Activated CD8-positive, alpha-beta T cell treated with anti-CD3 and anti-CD28 coated beads, Interleukin-2, amount 10 ng/mL, durations not matched to agents 7 days and 5 days (primary cell): ENCODE measurements at regions of chr15 and their contacts with region 1.

Region 1: DNA sequence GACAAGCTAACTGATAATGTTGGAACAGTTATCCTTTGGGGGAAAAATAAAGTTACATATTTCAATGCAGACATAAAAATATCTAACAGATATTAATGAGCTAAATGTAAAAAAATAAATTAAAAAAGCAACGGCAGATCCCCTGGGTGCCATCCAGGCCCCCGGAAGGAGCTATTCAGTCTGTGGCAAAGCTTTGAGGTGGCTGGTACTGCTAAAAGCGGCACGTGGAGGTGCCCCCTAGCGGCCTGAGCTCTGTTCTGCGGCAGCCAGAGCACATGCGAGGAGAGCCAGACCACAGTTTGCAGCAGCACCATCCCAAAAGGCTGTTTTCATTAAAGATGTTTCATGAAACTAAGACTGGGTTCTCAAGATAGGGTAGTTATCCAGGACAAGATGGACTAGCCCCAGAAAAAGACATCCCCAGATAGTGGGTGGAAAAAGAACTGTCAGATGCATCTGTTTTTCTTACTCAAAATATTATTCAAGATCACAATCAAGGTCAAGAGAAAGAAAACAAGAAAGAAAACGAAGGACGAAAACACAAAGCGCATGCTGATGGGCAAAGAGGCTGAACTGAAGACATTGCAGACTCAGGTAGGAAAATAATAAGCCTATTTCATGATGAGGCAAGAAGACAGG is 18.7 kb downstream of the AP3S2 start:
- DNase-seq: peak; percentile 88
- ATAC-seq: peak; percentile 100
- H3K4me3 Mint-ChIP-seq: no peak overlapping the region
- H3K27ac Mint-ChIP-seq: peak overlapping the region; percentile 52
- H3K4me1 Mint-ChIP-seq: peaks cover 6% of the 10 kb centered on the region
- H3K27me3 Mint-ChIP-seq: no peaks in the 10 kb centered on the region

Region 2: GRCh38 chr15:89750560-89751542 is 124.2 kb before region 1 on chr15 and contains the start of gene MESP1:
- CTCF ChIA-PET with region 1: interaction called, 11 read pairs
- POLR2A ChIA-PET with region 1: no interaction called
- DNase-seq: peak; percentile 90
- ATAC-seq: peak; percentile 96
- H3K4me3 Mint-ChIP-seq: peak within 1 kb of the TSS; percentile 69
- H3K27ac Mint-ChIP-seq: peak within 1 kb of the TSS; percentile 64
- H3K4me1 Mint-ChIP-seq: no peaks in the 10 kb centered on the region
- H3K27me3 Mint-ChIP-seq: peaks cover 24% of the 10 kb centered on the region
- total RNA-seq, gene MESP1: 1.8 to 2.4 TPM

Region 3: DNA sequence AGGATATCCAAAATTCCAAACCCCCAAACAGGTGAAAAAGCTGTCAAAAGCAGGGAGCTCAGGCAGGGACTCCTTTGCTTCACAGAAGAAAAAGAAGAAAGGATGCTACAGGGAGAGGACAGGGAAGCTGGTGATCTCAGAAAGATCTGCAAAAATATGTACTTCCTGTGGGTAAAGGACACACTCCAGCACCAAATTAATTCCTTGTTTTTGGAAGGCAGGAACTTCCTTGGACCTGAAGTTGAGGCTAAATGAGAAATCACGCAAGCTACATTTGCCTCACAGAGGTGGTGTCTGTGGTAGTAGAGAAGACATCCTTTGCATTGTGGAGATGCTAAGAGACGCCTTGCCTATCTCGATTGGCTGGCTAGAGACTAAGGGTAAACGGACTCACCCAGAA is 33.7 kb before region 1 on chr15:
- CTCF ChIA-PET with region 1: interaction called, 11 read pairs
- POLR2A ChIA-PET with region 1: no interaction called
- DNase-seq: no peak
- ATAC-seq: no peak
- H3K4me3 Mint-ChIP-seq: no peak overlapping the region
- H3K27ac Mint-ChIP-seq: no peak overlapping the region
- H3K4me1 Mint-ChIP-seq: peaks cover 16% of the 10 kb centered on the region
- H3K27me3 Mint-ChIP-seq: no peaks in the 10 kb centered on the region

Region 4: GRCh38 chr15:89888214-89888804 is 13.3 kb after region 1 on chr15:
- CTCF ChIA-PET with region 1: interaction called, 32 read pairs
- POLR2A ChIA-PET with region 1: interaction called, 5 read pairs
- DNase-seq: no peak
- ATAC-seq: no peak
- H3K4me3 Mint-ChIP-seq: no peak overlapping the region
- H3K27ac Mint-ChIP-seq: no peak overlapping the region
- H3K4me1 Mint-ChIP-seq: peaks cover 21% of the 10 kb centered on the region
- H3K27me3 Mint-ChIP-seq: no peaks in the 10 kb centered on the region

Region 5: DNA sequence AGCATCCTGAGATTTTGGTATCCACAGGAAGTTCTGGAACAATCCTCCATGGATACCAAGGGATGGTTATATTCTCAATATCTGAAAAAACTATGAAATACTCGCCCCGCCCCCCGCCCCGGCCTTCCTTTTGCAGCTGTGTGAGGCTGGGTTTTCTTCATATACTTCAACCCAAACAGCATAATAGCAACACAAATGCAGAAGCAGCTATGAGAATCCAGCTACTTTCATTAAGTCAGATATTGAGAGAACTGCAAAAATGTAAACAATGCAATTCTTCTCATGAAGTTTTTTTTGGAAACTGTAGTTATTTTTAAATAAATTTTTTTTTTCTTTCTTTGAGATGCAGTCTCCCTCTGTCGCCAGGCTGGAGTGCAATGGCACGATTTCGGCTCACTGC is 238.1 kb after region 1 on chr15:
- CTCF ChIA-PET with region 1: no interaction called
- POLR2A ChIA-PET with region 1: no interaction called
- DNase-seq: no peak
- ATAC-seq: no peak
- H3K4me3 Mint-ChIP-seq: no peak overlapping the region
- H3K27ac Mint-ChIP-seq: no peak overlapping the region
- H3K4me1 Mint-ChIP-seq: no peaks in the 10 kb centered on the region
- H3K27me3 Mint-ChIP-seq: no peaks in the 10 kb centered on the region